HEK293 (cell line): ENCODE measurements at regions of chr1 and their contacts with region 1.

Region 1: DNA sequence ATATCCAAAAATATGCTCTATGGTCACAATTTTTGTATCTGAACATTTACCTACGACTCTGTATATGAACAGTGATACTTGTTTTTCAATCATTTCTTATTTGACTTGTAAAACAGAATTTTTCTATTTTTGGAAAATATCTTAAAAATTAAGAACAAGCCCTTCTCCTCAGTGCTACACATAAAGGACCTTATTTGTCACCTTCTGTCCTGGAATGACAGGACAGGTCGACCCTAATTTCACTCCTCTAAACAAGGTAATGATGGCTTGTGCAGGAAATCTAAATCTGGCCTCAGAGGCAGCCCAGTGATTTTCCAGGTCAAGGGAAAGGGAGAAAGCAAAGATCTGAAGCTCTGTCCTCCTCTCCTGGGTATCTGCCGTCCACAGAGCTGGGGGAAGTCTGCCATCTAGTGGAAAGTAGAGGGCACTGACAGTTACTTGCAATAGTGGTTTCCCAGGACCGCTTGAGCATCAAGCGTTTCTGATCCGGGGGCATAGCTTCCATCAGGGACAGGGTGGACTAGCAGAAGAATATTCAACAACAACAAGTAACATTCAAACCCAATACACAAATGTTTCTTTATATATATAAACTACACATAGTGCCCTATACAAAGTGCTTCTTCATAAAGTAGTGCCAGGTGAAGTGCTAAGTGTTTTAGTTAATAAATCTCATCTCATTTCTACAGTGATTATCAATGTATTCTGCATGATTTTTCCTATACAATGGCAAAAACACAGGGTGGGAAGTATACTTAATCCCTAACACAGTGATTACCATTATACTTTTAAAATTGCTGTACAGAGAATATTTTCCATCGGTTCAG is 74.6 kb downstream of the SLC25A24 start:
- H3K4me3 ChIP-seq: no peak overlapping the region
- H3K27ac ChIP-seq: 0 out of 2 replicates have a peak overlapping the region, but pooled peaks have one; percentile 3
- H3K4me1 ChIP-seq: peaks cover 12% of the 10 kb centered on the region
- CTCF ChIP-seq: peak; percentile 93

Region 2: GRCh38 chr1:107795994-107796393 is 329.5 kb before region 1 on chr1:
- CTCF ChIA-PET with region 1: interaction called, 10 read pairs
- POLR2A ChIA-PET with region 1: no interaction called
- H3K4me3 ChIP-seq: no peak overlapping the region
- H3K27ac ChIP-seq: no peak overlapping the region
- H3K4me1 ChIP-seq: peaks cover 3% of the 10 kb centered on the region
- CTCF ChIP-seq: no peak